PC-3 (cell line): ENCODE measurements at regions of chr4 and their contacts with region 1.

Region 1: DNA sequence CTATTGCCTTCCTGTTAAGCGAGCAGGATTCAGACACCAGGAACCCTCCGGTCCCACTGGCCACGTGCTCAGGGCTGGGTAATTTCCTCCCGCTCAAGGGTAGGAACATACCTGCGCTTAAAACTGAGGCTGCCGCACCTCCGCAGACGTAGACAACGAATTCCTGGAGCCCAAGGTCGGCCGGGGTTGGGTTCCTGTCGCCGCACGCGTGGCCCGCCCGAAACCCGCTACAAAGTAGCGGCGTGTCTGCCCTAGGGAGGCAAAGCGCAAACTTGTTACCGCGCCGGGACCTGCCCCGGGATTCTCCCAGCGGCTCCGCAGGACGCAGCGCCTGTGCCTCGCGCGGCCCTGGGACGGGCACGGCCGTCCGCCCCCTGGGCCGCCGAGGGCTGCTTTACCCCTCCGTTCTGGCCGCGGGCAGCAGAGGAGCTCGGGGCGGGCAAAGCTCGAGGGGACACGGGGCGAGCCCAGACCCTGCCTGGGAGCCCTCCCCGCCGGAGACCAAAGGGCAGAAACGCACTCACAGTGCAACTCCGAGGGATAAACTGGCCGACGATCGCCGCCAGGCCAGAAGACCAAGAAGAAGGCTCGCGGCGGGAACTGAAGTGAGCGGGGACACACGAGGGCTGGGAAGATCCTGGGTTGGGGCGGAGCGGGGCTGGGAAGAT is at the start of gene ERVMER34-1:
- DNase-seq: peak; percentile 14
- ATAC-seq: peak; percentile 75
- H3K4me3 ChIP-seq: peak within 1 kb of the TSS; percentile 72
- H3K27ac ChIP-seq: no peak within 1 kb of the TSS
- H3K4me1 ChIP-seq: peaks cover 7% of the 10 kb centered on the region; the same call in 1 of the 2 replicates
- H3K27me3 ChIP-seq: peaks cover 10% of the 10 kb centered on the region
- CTCF ChIP-seq: no peak
- total RNA-seq, gene ERVMER34-1: 1.1 and 1.7 TPM in 2 replicates

Region 2: DNA sequence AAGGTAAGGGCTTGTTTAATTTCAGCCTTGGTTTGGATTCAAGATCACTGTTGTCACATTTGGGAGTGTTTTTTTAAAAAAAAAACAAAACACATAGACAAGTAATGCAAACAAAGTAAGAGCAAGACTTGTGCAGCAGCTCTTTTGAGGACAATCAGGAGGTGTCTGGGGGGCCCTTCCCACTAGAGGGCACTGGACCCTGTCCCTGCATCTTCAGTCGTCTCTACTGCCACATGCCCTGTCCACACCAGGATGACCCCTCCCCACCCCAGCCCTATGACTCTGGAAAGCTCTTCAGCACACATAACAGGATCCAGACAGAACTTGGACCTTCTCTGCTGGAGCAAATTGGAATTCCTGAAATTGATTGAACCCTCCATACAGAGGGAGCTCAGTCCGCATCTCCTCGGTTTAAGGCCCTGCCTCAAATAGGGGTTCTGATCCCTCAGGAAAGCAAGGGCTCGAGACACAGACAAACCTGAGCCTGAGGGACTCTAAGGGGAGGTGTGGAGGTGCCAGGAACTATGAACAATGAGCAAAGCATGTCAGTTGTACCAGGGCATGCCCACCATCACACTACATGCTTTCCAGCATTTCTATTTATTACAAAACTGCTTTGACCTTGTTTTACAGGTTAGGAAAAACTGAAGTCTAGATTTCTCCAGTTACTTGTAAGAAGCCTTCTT is 162.7 kb before region 1 on chr4:
- CTCF ChIA-PET with region 1: no interaction called
- POLR2A ChIA-PET with region 1: interaction called, 13 read pairs
- intact Hi-C with region 1: no loop called
- DNase-seq: peak; percentile 33
- ATAC-seq: peak; percentile 77
- H3K4me3 ChIP-seq: no peak overlapping the region
- H3K27ac ChIP-seq: no peak overlapping the region
- H3K4me1 ChIP-seq: no peaks in the 10 kb centered on the region
- H3K27me3 ChIP-seq: no peaks in the 10 kb centered on the region
- CTCF ChIP-seq: peak; percentile 65